ENCODE measurements at regions of chr15 and their contacts with region 1.

Region 1: GRCh38 chr15:44738340-44738984 is 2.1 kb downstream of the TRIM69 start:
- DNase-seq: peak; percentile 76
- ATAC-seq: peak; percentile 32
- H3K4me3 ChIP-seq: no peak overlapping the region
- H3K4me3 Mint-ChIP-seq: no peak overlapping the region
- H3K27ac ChIP-seq: no peak overlapping the region
- H3K27ac Mint-ChIP-seq: peak overlapping the region; percentile 20
- H3K4me1 ChIP-seq: peaks cover 23 to 27% of the 10 kb centered on the region in 2 donors
- H3K4me1 Mint-ChIP-seq: peaks cover 34% of the 10 kb centered on the region
- H3K27me3 ChIP-seq: no peaks in the 10 kb centered on the region
- H3K27me3 Mint-ChIP-seq: no peaks in the 10 kb centered on the region
- CTCF ChIP-seq: peak; percentile 90

Region 2: DNA sequence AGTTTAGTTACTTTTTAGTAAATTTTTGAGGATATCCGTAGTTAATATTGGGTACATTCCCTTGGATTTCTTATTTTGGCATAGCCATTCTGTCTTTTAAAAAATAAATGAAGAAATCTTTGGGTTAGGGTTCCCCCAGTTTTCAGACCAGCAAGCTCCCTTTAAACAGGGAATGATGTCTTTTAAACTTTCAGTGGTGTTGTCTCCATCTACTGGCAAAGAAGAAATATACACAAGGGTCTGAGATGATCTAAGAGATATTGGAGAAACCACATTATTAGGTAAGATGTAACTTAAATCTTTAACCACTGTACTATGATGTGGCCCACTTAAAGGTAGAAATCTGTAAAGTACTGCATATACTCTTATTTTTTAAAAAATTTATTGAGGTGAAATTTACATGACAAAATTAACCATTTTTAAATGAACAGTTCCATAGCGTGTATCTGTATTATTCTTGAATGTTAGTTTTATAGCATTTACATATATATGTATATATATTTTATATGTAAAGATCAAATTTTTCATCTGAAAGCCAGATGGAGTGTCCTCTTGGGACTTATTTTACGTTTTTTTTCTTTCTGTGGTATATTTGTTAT is 236.6 kb before region 1 on chr15:
- CTCF ChIA-PET with region 1: no interaction called
- POLR2A ChIA-PET with region 1: no interaction called
- intact Hi-C with region 1: no loop called
- DNase-seq: peak; percentile 43
- ATAC-seq: peak; percentile 28
- H3K4me3 ChIP-seq: no peak overlapping the region
- H3K4me3 Mint-ChIP-seq: no peak overlapping the region
- H3K27ac ChIP-seq: no peak overlapping the region
- H3K27ac Mint-ChIP-seq: no peak overlapping the region
- H3K4me1 ChIP-seq: no peaks in the 10 kb centered on the region
- H3K4me1 Mint-ChIP-seq: peaks cover 2% of the 10 kb centered on the region
- H3K27me3 ChIP-seq: no peaks in the 10 kb centered on the region
- H3K27me3 Mint-ChIP-seq: no peaks in the 10 kb centered on the region
- CTCF ChIP-seq: peak; percentile 74

Region 3: GRCh38 chr15:44573386-44573785 is 165.1 kb before region 1 on chr15:
- CTCF ChIA-PET with region 1: interaction called, 81 read pairs
- POLR2A ChIA-PET with region 1: interaction called, 4 read pairs
- intact Hi-C with region 1: loop called (anchors 1 kb)
- DNase-seq: no peak
- ATAC-seq: no peak
- H3K4me3 ChIP-seq: no peak overlapping the region
- H3K4me3 Mint-ChIP-seq: no peak overlapping the region
- H3K27ac ChIP-seq: no peak overlapping the region
- H3K27ac Mint-ChIP-seq: no peak overlapping the region
- H3K4me1 ChIP-seq: peaks cover 1 to 2% of the 10 kb centered on the region in 2 donors
- H3K4me1 Mint-ChIP-seq: peaks cover 2% of the 10 kb centered on the region
- H3K27me3 ChIP-seq: no peaks in the 10 kb centered on the region
- H3K27me3 Mint-ChIP-seq: no peaks in the 10 kb centered on the region
- CTCF ChIP-seq: no peak

Region 4: DNA sequence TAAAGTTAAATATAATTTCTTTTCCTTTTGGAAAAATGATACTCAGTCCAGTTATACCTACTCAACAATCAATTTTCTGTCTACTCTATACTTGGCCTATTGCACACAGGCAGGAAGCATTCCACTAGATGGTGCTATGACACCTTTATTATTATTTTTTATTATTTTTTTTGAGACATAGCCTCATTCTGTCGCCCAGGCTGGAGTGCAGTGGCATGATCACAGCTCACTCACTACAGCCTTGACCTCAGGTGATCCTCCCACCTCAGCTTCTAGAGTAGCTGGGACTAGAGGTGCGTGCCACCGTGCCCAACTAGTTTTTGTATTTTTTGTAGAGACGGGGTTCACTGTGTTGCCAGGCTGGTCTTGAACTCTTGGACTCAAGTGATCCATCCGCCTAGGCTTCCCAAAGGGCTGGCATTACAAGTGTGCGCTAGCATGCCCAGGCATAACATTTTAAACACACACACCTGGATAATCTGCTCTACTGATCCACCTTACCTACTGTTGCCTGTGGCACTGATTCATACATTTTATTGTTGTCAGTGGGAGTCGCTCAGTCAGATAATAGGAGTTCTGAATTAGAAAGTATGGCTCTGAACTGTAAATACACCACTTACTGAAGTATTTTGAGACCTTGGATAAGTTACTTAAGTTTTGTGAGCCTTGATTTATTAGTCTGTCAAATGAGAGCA is 145.3 kb before region 1 on chr15:
- CTCF ChIA-PET with region 1: interaction called, 42 read pairs
- POLR2A ChIA-PET with region 1: interaction called, 3 read pairs
- intact Hi-C with region 1: no loop called
- DNase-seq: peak; percentile 57
- ATAC-seq: peak; percentile 60
- H3K4me3 ChIP-seq: no peak overlapping the region
- H3K4me3 Mint-ChIP-seq: no peak overlapping the region
- H3K27ac ChIP-seq: peak overlapping the region in 1 of 2 donors; percentile 70
- H3K27ac Mint-ChIP-seq: peak overlapping the region; percentile 56
- H3K4me1 ChIP-seq: peaks cover 5 to 8% of the 10 kb centered on the region in 2 donors
- H3K4me1 Mint-ChIP-seq: peaks cover 10% of the 10 kb centered on the region
- H3K27me3 ChIP-seq: no peaks in the 10 kb centered on the region
- H3K27me3 Mint-ChIP-seq: no peaks in the 10 kb centered on the region
- CTCF ChIP-seq: peak; percentile 74

Region 5: GRCh38 chr15:44656298-44656697 is 82.2 kb before region 1 on chr15:
- CTCF ChIA-PET with region 1: interaction called, 17 read pairs
- POLR2A ChIA-PET with region 1: interaction called, 819 read pairs
- intact Hi-C with region 1: no loop called
- DNase-seq: no peak
- ATAC-seq: no peak
- H3K4me3 ChIP-seq: no peak overlapping the region
- H3K4me3 Mint-ChIP-seq: no peak overlapping the region
- H3K27ac ChIP-seq: peak overlapping the region in 1 of 2 donors; percentile 27
- H3K27ac Mint-ChIP-seq: no peak overlapping the region
- H3K4me1 ChIP-seq: no peaks in the 10 kb centered on the region
- H3K4me1 Mint-ChIP-seq: peaks cover 25% of the 10 kb centered on the region
- H3K27me3 ChIP-seq: no peaks in the 10 kb centered on the region
- H3K27me3 Mint-ChIP-seq: no peaks in the 10 kb centered on the region
- CTCF ChIP-seq: no peak

Region 6: GRCh38 chr15:44682211-44682610 is 56.3 kb before region 1 on chr15:
- CTCF ChIA-PET with region 1: interaction called, 24 read pairs
- POLR2A ChIA-PET with region 1: interaction called, 4 read pairs
- intact Hi-C with region 1: no loop called
- DNase-seq: no peak
- ATAC-seq: no peak
- H3K4me3 ChIP-seq: no peak overlapping the region
- H3K4me3 Mint-ChIP-seq: peak overlapping the region; percentile 78
- H3K27ac ChIP-seq: peak overlapping the region; percentile 79 to 80
- H3K27ac Mint-ChIP-seq: peak overlapping the region; percentile 96
- H3K4me1 ChIP-seq: peaks cover 47 to 48% of the 10 kb centered on the region in 2 donors
- H3K4me1 Mint-ChIP-seq: peaks cover 80% of the 10 kb centered on the region
- H3K27me3 ChIP-seq: no peaks in the 10 kb centered on the region
- H3K27me3 Mint-ChIP-seq: no peaks in the 10 kb centered on the region
- CTCF ChIP-seq: no peak

Region 7: GRCh38 chr15:44804298-44805046 is 66.0 kb after region 1 on chr15:
- CTCF ChIA-PET with region 1: no interaction called
- POLR2A ChIA-PET with region 1: no interaction called
- intact Hi-C with region 1: no loop called
- DNase-seq: no peak
- ATAC-seq: no peak
- H3K4me3 ChIP-seq: no peak overlapping the region
- H3K4me3 Mint-ChIP-seq: no peak overlapping the region
- H3K27ac ChIP-seq: no peak overlapping the region
- H3K27ac Mint-ChIP-seq: no peak overlapping the region
- H3K4me1 ChIP-seq: no peaks in the 10 kb centered on the region
- H3K4me1 Mint-ChIP-seq: no peaks in the 10 kb centered on the region
- H3K27me3 ChIP-seq: peaks cover 0 to 5% (median 1%) of the 10 kb centered on the region in 4 experiments
- H3K27me3 Mint-ChIP-seq: peaks cover 11% of the 10 kb centered on the region
- CTCF ChIP-seq: no peak

Measured in B cell (primary cell).